ENCODE measurements at regions of chr5 and their contacts with region 1.

Region 1: DNA sequence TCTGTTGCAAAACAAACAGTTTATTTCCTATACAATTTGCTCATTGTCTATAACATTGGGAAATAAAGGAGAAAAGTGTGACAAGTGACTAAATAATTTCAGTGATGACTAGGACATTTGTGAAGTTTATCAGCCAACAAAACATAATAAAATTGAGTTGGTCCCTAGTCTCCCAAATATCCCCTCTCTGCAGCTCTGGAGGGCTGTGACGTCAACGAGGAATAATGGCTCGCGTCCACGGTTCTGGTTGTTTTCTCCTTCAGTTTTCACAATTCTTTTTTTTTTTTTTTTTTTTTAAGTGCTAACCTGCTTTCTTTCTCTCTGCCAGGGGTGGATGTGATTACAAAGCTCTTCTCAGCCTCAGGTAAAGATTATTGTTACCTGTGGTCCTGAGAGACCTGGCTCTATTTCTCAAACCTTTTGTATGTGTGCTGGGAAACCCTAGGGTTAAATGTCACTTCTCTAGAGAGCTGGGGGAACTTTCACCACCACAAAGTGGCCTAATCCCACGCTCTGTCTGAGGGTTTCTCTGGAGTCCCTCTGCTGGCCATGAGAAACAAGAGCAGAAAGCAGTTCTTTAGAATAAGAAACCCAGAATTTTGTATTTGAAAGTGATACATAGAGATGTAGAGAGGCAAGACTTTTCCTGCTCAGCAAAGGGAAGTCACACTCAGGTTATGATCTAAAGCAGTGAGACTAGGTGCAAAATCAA is 36.2 kb upstream of the ANKRD55 start:
- DNase-seq: no peak
- H3K4me3 ChIP-seq: no peak overlapping the region
- H3K27ac ChIP-seq: no peak overlapping the region
- H3K4me1 ChIP-seq: peaks cover 8% of the 10 kb centered on the region
- H3K27me3 ChIP-seq: no peaks in the 10 kb centered on the region
- CTCF ChIP-seq: peak in 1 of 3 experiments; percentile 47
- POLR2A ChIP-seq: no peak

Region 2: GRCh38 chr5:55885359-55885758 is 384.0 kb before region 1 on chr5:
- intact Hi-C with region 1: no loop called
- DNase-seq: no peak
- H3K4me3 ChIP-seq: no peak overlapping the region
- H3K27ac ChIP-seq: no peak overlapping the region
- H3K4me1 ChIP-seq: no peaks in the 10 kb centered on the region
- H3K27me3 ChIP-seq: no peaks in the 10 kb centered on the region
- CTCF ChIP-seq: no peak
- POLR2A ChIP-seq: no peak

Region 3: DNA sequence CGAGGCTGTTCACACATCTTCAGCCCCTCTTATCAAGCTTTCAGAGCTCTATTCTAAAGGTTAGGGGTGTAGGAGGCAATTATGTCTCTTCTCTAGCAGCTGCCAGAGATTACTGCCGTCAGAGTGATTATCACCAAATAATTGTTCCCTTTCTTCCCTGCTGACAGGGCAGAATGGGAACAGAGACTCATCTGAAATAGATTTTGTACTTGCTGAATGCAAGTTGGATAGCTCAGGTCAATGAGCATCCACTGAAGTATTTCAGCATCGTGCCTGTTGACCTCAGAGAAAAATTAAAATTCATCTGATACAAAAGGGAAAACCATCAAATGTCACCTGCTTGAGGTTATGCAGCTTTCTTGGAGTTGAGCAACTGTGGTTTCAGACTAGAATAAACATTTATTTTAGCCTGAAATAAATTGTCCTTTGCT is 332.3 kb after region 1 on chr5:
- intact Hi-C with region 1: no loop called
- DNase-seq: no peak
- H3K4me3 ChIP-seq: no peak overlapping the region
- H3K27ac ChIP-seq: no peak overlapping the region
- H3K4me1 ChIP-seq: no peaks in the 10 kb centered on the region
- H3K27me3 ChIP-seq: no peaks in the 10 kb centered on the region
- CTCF ChIP-seq: no peak
- POLR2A ChIP-seq: no peak

Region 4: GRCh38 chr5:56838409-56839039 is 569.2 kb after region 1 on chr5:
- intact Hi-C with region 1: loop called (anchors 1 kb)
- DNase-seq: no peak
- H3K4me3 ChIP-seq: no peak overlapping the region
- H3K27ac ChIP-seq: peak overlapping the region; percentile 70
- H3K4me1 ChIP-seq: peaks cover 30% of the 10 kb centered on the region
- H3K27me3 ChIP-seq: no peaks in the 10 kb centered on the region
- CTCF ChIP-seq: peak in 2 of 3 experiments; percentile 51 to 70
- POLR2A ChIP-seq: no peak

Region 5: DNA sequence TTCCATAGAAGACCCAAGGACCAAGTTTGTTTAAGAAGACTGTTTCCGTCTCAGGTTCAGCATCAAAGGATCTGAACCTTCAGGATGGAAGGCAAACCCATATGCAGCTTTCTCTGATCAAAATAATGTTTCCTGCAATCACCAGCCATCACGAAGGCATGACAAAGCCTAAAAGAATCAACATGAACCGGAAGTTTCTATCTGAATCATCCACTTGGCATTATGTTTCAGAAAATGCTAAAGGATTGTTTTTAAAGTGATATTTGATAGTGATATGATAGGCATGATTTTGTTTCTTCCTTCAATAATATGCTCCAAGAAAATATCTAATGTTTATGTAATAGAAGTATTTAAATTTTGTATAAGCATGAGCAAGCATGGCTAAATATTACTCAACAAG is 1970.9 kb after region 1 on chr5:
- intact Hi-C with region 1: loop called (anchors 5 kb)
- DNase-seq: no peak
- H3K4me3 ChIP-seq: no peak overlapping the region
- H3K27ac ChIP-seq: no peak overlapping the region
- H3K4me1 ChIP-seq: peaks cover under 1% of the 10 kb centered on the region
- H3K27me3 ChIP-seq: no peaks in the 10 kb centered on the region
- CTCF ChIP-seq: no peak
- POLR2A ChIP-seq: no peak

Measured in vagina (tissue), 2 donors.